H1 (cell line): ENCODE measurements at regions of chr21 and their contacts with region 1.

Region 1: GRCh38 chr21:25801217-25802014 is 66.6 kb downstream of the GABPA start:
- DNase-seq: peak; percentile 83 to 97
- H3K4me3 ChIP-seq: peak overlapping the region in 1 of 4 experiments; percentile 19; a peak in 1 of 8 replicates
- H3K27ac ChIP-seq: no peak overlapping the region
- H3K4me1 ChIP-seq: peaks cover 0 to 2% (median under 1%) of the 10 kb centered on the region in 4 experiments; a peak in 1 of 7 replicates
- H3K27me3 ChIP-seq: no peaks in the 10 kb centered on the region
- CTCF ChIP-seq: peak; percentile 99 to 100 (median 99)
- EP300 ChIP-seq: no peak
- POLR2A ChIP-seq: no peak
- RAD21 ChIP-seq: peak; percentile 73

Region 2: DNA sequence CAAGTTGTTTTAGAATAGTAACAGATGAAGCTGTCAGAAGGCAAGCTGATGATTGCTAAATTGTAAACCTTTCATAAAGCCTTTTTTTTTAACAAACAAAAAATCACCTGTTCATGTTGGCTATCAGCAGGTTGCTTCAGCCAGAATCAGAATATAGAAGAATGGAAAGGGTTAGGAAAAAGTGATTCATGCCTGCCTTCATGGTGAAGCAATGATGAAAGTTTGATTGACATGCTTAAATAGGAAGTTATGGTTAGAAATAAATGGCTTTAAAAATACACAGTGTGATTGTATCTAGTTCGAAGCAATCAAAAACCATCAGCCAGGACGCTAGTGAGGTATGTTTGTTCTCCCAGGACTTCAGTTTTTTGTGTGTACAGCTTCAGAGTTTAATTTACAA is 28.7 kb before region 1 on chr21:
- CTCF ChIA-PET with region 1: interaction called, 11 read pairs
- POLR2A ChIA-PET with region 1: no interaction called
- DNase-seq: no peak
- H3K4me3 ChIP-seq: no peak overlapping the region
- H3K27ac ChIP-seq: no peak overlapping the region
- H3K4me1 ChIP-seq: no peaks in the 10 kb centered on the region
- H3K27me3 ChIP-seq: no peaks in the 10 kb centered on the region
- CTCF ChIP-seq: no peak
- EP300 ChIP-seq: no peak
- POLR2A ChIP-seq: no peak
- RAD21 ChIP-seq: no peak

Region 3: GRCh38 chr21:25790122-25790877 is 11.1 kb before region 1 on chr21:
- CTCF ChIA-PET with region 1: interaction called, 31 read pairs
- POLR2A ChIA-PET with region 1: no interaction called
- DNase-seq: no peak
- H3K4me3 ChIP-seq: no peak overlapping the region
- H3K27ac ChIP-seq: no peak overlapping the region
- H3K4me1 ChIP-seq: peaks cover 0 to 3% (median 0%) of the 10 kb centered on the region in 4 experiments; a peak in 2 of 7 replicates
- H3K27me3 ChIP-seq: no peaks in the 10 kb centered on the region
- CTCF ChIP-seq: peak in 2 of 3 experiments; percentile 37 to 40; a peak in 3 of 4 replicates
- EP300 ChIP-seq: no peak
- POLR2A ChIP-seq: no peak
- RAD21 ChIP-seq: peak; percentile 56 to 70

Region 4: GRCh38 chr21:25831300-25831960 is 30.0 kb after region 1 on chr21:
- CTCF ChIA-PET with region 1: interaction called, 11 read pairs
- POLR2A ChIA-PET with region 1: no interaction called
- DNase-seq: no peak
- H3K4me3 ChIP-seq: no peak overlapping the region
- H3K27ac ChIP-seq: no peak overlapping the region
- H3K4me1 ChIP-seq: no peaks in the 10 kb centered on the region
- H3K27me3 ChIP-seq: no peaks in the 10 kb centered on the region
- CTCF ChIP-seq: no peak
- EP300 ChIP-seq: no peak
- POLR2A ChIP-seq: no peak
- RAD21 ChIP-seq: no peak